CD14-positive monocyte (primary cell): ENCODE measurements at regions of chrX and their contacts with region 1.

Region 1: DNA sequence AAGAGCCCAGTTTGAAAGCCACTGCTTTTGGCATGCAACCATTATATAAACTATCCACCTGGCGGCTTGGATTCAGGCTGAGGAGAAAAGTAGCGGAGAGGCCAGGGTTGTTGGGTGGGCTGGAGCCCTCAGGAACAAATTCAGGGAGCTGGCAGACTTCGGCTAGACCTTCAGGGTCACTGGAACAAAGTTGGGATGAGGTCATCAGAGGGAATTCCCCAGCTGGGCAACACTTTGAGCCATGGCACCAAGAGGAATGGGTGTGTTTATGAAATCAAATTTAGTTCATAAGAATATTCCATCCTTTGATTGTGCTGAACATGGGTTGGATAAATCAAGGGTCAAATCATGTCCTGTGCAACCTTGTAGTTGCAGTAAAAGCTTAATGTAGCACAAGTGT is 22.0 kb downstream of the MTMR1 start:
- DNase-seq: no peak
- H3K4me3 ChIP-seq: no peak overlapping the region
- H3K4me3 Mint-ChIP-seq: no peak overlapping the region
- H3K27ac ChIP-seq: no peak overlapping the region
- H3K27ac Mint-ChIP-seq: no peak overlapping the region
- H3K4me1 ChIP-seq: peaks cover 6 to 10% of the 10 kb centered on the region in 2 donors
- H3K4me1 Mint-ChIP-seq: peaks cover 23% of the 10 kb centered on the region
- H3K27me3 ChIP-seq: no peaks in the 10 kb centered on the region
- H3K27me3 Mint-ChIP-seq: peaks cover 0 to 3% (median 0%) of the 10 kb centered on the region in 3 donors
- CTCF ChIP-seq: no peak

Region 2: GRCh38 chrX:150683536-150684146 is 31.5 kb before region 1 on chrX:
- intact Hi-C with region 1: loop called (anchors 2 kb)
- DNase-seq: peak; percentile 21 to 43 (median 33)
- H3K4me3 ChIP-seq: no peak overlapping the region
- H3K4me3 Mint-ChIP-seq: no peak overlapping the region
- H3K27ac ChIP-seq: no peak overlapping the region
- H3K27ac Mint-ChIP-seq: no peak overlapping the region
- H3K4me1 ChIP-seq: peaks cover 8 to 11% of the 10 kb centered on the region in 2 donors
- H3K4me1 Mint-ChIP-seq: peaks cover 16% of the 10 kb centered on the region
- H3K27me3 ChIP-seq: no peaks in the 10 kb centered on the region
- H3K27me3 Mint-ChIP-seq: peaks cover 0 to 7% (median 4%) of the 10 kb centered on the region in 3 donors
- CTCF ChIP-seq: peak; percentile 67